Head of caudate nucleus (tissue), 42 donors: ENCODE measurements at regions of chr15 and their contacts with region 1.

Region 1: GRCh38 chr15:31365655-31366127 is 39.1 kb downstream of the KLF13 start:
- DNase-seq: peak; percentile 84 to 97 (median 94)

Region 2: DNA sequence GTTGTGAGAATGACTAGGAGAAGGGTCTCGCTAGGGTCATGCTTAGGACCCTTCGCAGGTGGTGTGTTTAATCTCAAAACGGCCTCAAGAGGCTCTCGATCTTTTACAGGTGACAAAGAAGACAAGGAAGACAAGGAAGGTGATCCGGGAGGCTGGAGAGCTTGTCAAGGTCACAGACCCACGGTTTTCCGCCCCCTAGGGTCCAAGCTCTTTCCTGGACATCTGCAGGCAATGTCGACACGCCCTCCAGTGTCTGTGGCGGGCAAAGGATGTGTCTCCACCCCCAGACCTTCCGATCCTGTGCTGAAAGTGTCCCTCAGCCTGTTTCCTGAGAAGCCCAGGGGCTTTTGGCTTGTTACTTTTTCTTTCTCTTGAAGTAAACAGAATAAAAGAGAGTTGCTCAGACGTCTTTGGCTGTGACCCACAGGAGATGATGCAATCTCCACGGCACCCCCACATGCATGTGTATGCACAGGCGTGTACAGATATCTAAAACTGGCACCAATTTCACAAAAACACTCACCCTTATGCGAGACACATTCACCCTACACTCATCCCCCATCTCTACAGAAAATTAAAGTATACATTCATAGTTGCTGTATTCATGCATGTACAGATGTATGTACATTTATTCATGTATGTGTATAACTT is 69.7 kb after region 1 on chr15:
- intact Hi-C with region 1: loop called (anchors 10 kb)
- DNase-seq: peak; percentile 57 to 92 (median 79)